CD4-positive, alpha-beta T cell (primary cell): ENCODE measurements at regions of chr7 and their contacts with region 1.

Region 1: GRCh38 chr7:139075031-139075652 is 34.4 kb downstream of the ZC3HAV1 start:
- DNase-seq: peak; percentile 43 to 91 (median 57)
- ATAC-seq: peak; percentile 78
- H3K4me3 ChIP-seq: no peak overlapping the region
- H3K4me3 Mint-ChIP-seq: peak overlapping the region; percentile 76
- H3K27ac ChIP-seq: peak overlapping the region; percentile 23 to 56
- H3K27ac Mint-ChIP-seq: peak overlapping the region; percentile 84
- H3K4me1 ChIP-seq: peaks cover 61% of the 10 kb centered on the region
- H3K4me1 Mint-ChIP-seq: peaks cover 64% of the 10 kb centered on the region
- H3K27me3 ChIP-seq: no peaks in the 10 kb centered on the region
- H3K27me3 Mint-ChIP-seq: no peaks in the 10 kb centered on the region
- CTCF ChIP-seq: peak; percentile 80

Region 2: GRCh38 chr7:138886501-138886917 is 188.6 kb before region 1 on chr7:
- CTCF ChIA-PET with region 1: interaction called, 14 read pairs
- POLR2A ChIA-PET with region 1: interaction called, 11 read pairs
- intact Hi-C with region 1: loop called (anchors 1 to 5 kb)
- DNase-seq: peak in 8 of 14 experiments; percentile 13 to 85 (median 52)
- ATAC-seq: peak; percentile 95
- H3K4me3 ChIP-seq: no peak overlapping the region
- H3K4me3 Mint-ChIP-seq: no peak overlapping the region
- H3K27ac ChIP-seq: no peak overlapping the region
- H3K27ac Mint-ChIP-seq: peak overlapping the region; percentile 2
- H3K4me1 ChIP-seq: peaks cover 16% of the 10 kb centered on the region
- H3K4me1 Mint-ChIP-seq: peaks cover 20% of the 10 kb centered on the region
- H3K27me3 ChIP-seq: no peaks in the 10 kb centered on the region
- H3K27me3 Mint-ChIP-seq: no peaks in the 10 kb centered on the region
- CTCF ChIP-seq: peak; percentile 75

Region 3: GRCh38 chr7:139043823-139044812 is 31.0 kb before region 1 on chr7:
- CTCF ChIA-PET with region 1: interaction called, 11 read pairs
- POLR2A ChIA-PET with region 1: interaction called, 4 read pairs
- intact Hi-C with region 1: no loop called
- DNase-seq: peak; percentile 37 to 81 (median 68)
- ATAC-seq: peak; percentile 67
- H3K4me3 ChIP-seq: no peak overlapping the region
- H3K4me3 Mint-ChIP-seq: peak overlapping the region; percentile 18
- H3K27ac ChIP-seq: peak overlapping the region; percentile 10 to 46
- H3K27ac Mint-ChIP-seq: peak overlapping the region; percentile 45
- H3K4me1 ChIP-seq: peaks cover 41% of the 10 kb centered on the region
- H3K4me1 Mint-ChIP-seq: peaks cover 63% of the 10 kb centered on the region
- H3K27me3 ChIP-seq: no peaks in the 10 kb centered on the region
- H3K27me3 Mint-ChIP-seq: no peaks in the 10 kb centered on the region
- CTCF ChIP-seq: no peak

Region 4: DNA sequence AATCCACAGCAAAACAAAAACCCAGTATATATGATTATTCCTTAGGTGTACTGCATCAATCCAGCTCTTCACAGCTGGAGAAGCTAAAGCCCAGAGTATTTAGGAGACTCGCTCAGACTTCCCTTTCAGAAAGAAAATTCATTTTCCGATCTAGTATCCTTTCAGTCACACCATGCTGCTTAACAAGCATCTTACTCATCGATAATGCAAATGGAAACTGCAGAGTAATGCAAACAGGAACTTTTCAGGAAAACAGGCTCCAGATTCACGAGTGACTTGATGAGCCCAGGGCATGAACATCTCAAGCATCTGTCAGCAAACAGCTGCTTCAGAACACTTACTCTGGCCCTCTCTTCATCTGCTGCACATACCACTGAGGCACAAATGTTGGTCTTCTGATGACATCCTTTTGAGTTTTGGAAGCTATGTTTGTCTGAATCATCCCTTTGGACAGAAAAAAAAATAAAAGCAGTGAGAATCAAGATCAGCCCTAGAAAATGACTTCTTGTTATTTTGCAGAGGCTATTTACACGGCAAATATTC is 14.4 kb before region 1 on chr7:
- CTCF ChIA-PET with region 1: interaction called, 18 read pairs
- POLR2A ChIA-PET with region 1: interaction called, 11 read pairs
- intact Hi-C with region 1: no loop called
- DNase-seq: no peak
- ATAC-seq: no peak
- H3K4me3 ChIP-seq: no peak overlapping the region
- H3K4me3 Mint-ChIP-seq: no peak overlapping the region
- H3K27ac ChIP-seq: no peak overlapping the region
- H3K27ac Mint-ChIP-seq: peak overlapping the region; percentile 83
- H3K4me1 ChIP-seq: peaks cover 18% of the 10 kb centered on the region
- H3K4me1 Mint-ChIP-seq: peaks cover 65% of the 10 kb centered on the region
- H3K27me3 ChIP-seq: no peaks in the 10 kb centered on the region
- H3K27me3 Mint-ChIP-seq: no peaks in the 10 kb centered on the region
- CTCF ChIP-seq: no peak

Region 5: DNA sequence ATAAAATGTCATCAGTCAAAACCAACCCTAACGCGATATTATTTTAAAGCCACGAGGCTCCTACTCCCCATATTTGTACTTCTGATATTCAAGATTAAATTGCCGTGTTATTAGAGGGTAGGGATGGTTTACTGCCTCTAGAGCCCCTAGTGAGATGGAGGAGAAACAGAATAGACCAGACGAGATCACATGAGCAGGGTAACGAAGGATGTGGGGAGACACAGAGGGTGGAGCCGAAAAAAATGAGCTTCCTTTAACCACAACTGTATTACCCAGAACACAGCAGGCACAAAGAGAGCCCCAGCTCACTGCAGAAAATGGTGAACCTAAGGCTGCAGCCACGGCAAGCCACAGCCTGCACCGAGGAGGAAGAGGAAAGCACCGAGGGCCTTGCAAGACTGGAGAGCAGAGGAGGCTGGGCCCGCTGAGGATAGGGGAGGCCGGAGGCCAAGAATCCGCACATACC is 20.1 kb after region 1 on chr7:
- CTCF ChIA-PET with region 1: interaction called, 38 read pairs
- POLR2A ChIA-PET with region 1: interaction called, 60 read pairs
- intact Hi-C with region 1: loop called in 1 of 2 experiments (anchors 2 kb)
- DNase-seq: peak; percentile 65 to 96 (median 76)
- ATAC-seq: peak; percentile 87
- H3K4me3 ChIP-seq: peak overlapping the region; percentile 52
- H3K4me3 Mint-ChIP-seq: peak overlapping the region; percentile 89
- H3K27ac ChIP-seq: peak overlapping the region; percentile 74 to 80
- H3K27ac Mint-ChIP-seq: peak overlapping the region; percentile 92
- H3K4me1 ChIP-seq: peaks cover 87% of the 10 kb centered on the region
- H3K4me1 Mint-ChIP-seq: peaks cover 89% of the 10 kb centered on the region
- H3K27me3 ChIP-seq: no peaks in the 10 kb centered on the region
- H3K27me3 Mint-ChIP-seq: no peaks in the 10 kb centered on the region
- CTCF ChIP-seq: no peak

Region 6: DNA sequence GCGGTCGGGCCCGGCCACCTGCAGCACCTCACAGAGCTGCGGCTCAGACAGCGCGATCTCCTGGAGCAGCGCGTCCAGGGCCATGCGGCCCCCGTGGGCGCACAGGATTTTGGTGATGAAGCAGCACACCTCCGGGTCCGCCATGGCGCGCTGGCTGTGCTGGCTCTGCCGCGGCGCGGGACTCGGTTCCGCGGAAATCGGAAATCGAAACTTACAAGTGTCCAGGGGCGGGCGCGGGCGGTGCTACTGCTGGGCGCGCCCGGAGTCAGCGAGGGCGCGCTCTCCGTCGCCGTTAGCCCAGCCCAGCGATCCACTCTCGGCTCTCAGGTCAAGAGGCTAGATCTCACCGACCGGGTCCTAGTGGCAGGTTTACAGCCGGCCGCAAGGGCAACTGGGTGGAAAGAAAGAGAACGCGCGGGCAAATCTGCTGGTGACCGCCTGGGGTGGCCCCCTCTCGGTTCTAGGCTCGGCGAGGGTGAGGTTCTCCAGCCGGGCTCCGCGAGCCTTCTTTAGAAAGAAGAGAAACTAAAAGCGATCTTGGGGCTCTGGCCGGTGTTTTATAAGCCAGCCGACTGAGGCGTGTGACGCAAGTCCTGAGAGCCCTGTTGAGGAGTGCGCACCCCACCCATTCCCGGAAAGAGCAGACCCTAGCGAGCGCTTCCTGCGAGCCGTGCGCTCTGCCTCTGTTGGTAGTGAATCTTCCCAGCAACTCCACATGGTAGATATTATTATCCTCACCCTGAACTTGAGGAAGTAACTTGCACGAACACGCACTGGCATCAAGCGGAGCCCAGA is 34.2 kb after region 1 on chr7 and contains the start of gene ZC3HAV1:
- CTCF ChIA-PET with region 1: interaction called, 10 read pairs
- POLR2A ChIA-PET with region 1: interaction called, 26 read pairs
- intact Hi-C with region 1: loop called (anchors 2 to 5 kb)
- DNase-seq: peak; percentile 80 to 97 (median 88)
- ATAC-seq: peak; percentile 86
- H3K4me3 ChIP-seq: peak within 1 kb of the TSS; percentile 97
- H3K4me3 Mint-ChIP-seq: peak within 1 kb of the TSS; percentile 99
- H3K27ac ChIP-seq: peak within 1 kb of the TSS; percentile 97 to 98
- H3K27ac Mint-ChIP-seq: peak within 1 kb of the TSS; percentile 95
- H3K4me1 ChIP-seq: peaks cover 35% of the 10 kb centered on the region
- H3K4me1 Mint-ChIP-seq: peaks cover 52% of the 10 kb centered on the region
- H3K27me3 ChIP-seq: no peaks in the 10 kb centered on the region
- H3K27me3 Mint-ChIP-seq: no peaks in the 10 kb centered on the region
- CTCF ChIP-seq: no peak
- total RNA-seq, gene ZC3HAV1: 169 to 178 TPM

Region 7: GRCh38 chr7:139451638-139452037 is 376.5 kb after region 1 on chr7:
- CTCF ChIA-PET with region 1: no interaction called
- POLR2A ChIA-PET with region 1: no interaction called
- intact Hi-C with region 1: no loop called
- DNase-seq: no peak
- ATAC-seq: no peak
- H3K4me3 ChIP-seq: no peak overlapping the region
- H3K4me3 Mint-ChIP-seq: no peak overlapping the region
- H3K27ac ChIP-seq: no peak overlapping the region
- H3K27ac Mint-ChIP-seq: no peak overlapping the region
- H3K4me1 ChIP-seq: no peaks in the 10 kb centered on the region
- H3K4me1 Mint-ChIP-seq: no peaks in the 10 kb centered on the region
- H3K27me3 ChIP-seq: no peaks in the 10 kb centered on the region
- H3K27me3 Mint-ChIP-seq: no peaks in the 10 kb centered on the region
- CTCF ChIP-seq: no peak

Region 8: GRCh38 chr7:139635526-139636302 is 560.6 kb after region 1 on chr7:
- CTCF ChIA-PET with region 1: no interaction called
- POLR2A ChIA-PET with region 1: no interaction called
- intact Hi-C with region 1: no loop called
- DNase-seq: peak; percentile 44 to 93 (median 64)
- ATAC-seq: peak; percentile 87
- H3K4me3 ChIP-seq: peak overlapping the region; percentile 27
- H3K4me3 Mint-ChIP-seq: peak overlapping the region; percentile 72
- H3K27ac ChIP-seq: peak overlapping the region; percentile 58 to 71
- H3K27ac Mint-ChIP-seq: peak overlapping the region; percentile 92
- H3K4me1 ChIP-seq: peaks cover 47% of the 10 kb centered on the region
- H3K4me1 Mint-ChIP-seq: peaks cover 73% of the 10 kb centered on the region
- H3K27me3 ChIP-seq: no peaks in the 10 kb centered on the region
- H3K27me3 Mint-ChIP-seq: no peaks in the 10 kb centered on the region
- CTCF ChIP-seq: no peak